Endothelial cell of umbilical vein (primary cell): ENCODE measurements at regions of chr6 and their contacts with region 1.

Region 1: DNA sequence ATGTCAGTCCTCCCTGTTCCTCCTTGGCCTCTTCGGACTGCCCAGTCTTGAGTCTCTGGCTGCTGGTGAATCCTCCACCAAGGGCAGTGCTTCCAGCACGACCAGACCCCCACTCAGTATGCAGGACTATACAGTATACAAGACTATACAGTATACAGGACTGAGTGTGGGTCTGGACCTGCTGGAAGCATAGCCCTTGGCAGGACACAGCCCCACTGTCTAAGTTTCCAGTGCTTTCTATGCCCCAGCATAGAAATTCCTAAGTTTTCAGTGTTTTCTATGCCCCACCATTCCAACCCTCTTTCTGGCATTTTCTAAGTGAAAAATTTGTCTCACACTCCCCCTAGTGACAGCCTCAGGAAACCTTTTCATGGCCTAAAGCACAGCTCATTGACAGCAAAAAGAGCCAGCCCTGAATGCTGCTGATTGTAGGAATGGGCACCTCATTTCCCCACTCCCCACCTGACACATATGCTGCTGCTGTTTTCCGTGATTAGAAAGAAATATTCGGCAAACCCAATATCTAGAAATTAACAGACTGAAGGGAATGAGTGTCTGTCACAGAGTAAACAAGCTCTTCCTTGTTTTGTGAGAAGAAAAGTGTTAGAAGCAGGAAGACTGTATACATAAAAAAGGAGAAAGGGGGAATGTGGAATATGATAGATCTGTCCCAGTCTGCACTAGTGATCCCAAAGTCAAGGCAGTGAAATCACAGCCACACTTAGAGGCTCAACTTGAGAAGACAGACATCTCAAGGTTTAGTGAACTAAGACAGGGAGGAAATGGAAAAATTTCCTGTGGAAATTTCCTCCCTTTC is 206.9 kb downstream of the IBTK start:
- DNase-seq: peak; percentile 72
- H3K4me3 ChIP-seq: no peak overlapping the region
- H3K27ac ChIP-seq: no peak overlapping the region
- H3K4me1 ChIP-seq: peaks cover 9% of the 10 kb centered on the region
- H3K27me3 ChIP-seq: no peaks in the 10 kb centered on the region
- CTCF ChIP-seq: peak; percentile 73 to 76
- POLR2A ChIP-seq: no peak

Region 2: GRCh38 chr6:80733641-80734040 is 1307.0 kb before region 1 on chr6:
- CTCF ChIA-PET with region 1: no interaction called
- POLR2A ChIA-PET with region 1: no interaction called
- dilution Hi-C with region 1: no loop called
- intact Hi-C with region 1: loop called (anchors 10 kb)
- DNase-seq: no peak
- H3K4me3 ChIP-seq: no peak overlapping the region
- H3K27ac ChIP-seq: no peak overlapping the region
- H3K4me1 ChIP-seq: no peaks in the 10 kb centered on the region
- H3K27me3 ChIP-seq: no peaks in the 10 kb centered on the region
- CTCF ChIP-seq: no peak
- POLR2A ChIP-seq: no peak

Region 3: DNA sequence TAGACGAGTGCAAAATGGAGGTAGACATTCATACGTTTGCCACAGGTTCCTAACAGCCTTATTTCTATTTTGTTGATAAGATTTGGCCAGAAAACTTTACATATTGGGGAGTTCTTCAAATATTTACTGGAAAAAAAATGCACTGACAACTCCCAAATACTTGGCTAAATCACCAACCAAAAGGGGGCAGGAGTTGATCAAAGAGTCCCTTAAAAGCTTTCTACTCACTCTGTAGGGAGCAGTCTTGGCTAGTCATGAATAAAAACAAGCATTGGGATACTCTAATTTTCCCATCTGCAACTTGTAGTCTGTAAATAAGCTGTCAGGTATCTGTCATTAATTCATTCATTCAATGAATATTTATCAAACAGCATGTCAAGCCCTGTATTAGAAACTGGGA is 306.5 kb before region 1 on chr6:
- CTCF ChIA-PET with region 1: interaction called, 23 read pairs
- POLR2A ChIA-PET with region 1: no interaction called
- dilution Hi-C with region 1: no loop called
- intact Hi-C with region 1: no loop called
- DNase-seq: peak; percentile 29
- H3K4me3 ChIP-seq: no peak overlapping the region
- H3K27ac ChIP-seq: no peak overlapping the region
- H3K4me1 ChIP-seq: no peaks in the 10 kb centered on the region
- H3K27me3 ChIP-seq: no peaks in the 10 kb centered on the region
- CTCF ChIP-seq: no peak
- POLR2A ChIP-seq: no peak

Region 4: DNA sequence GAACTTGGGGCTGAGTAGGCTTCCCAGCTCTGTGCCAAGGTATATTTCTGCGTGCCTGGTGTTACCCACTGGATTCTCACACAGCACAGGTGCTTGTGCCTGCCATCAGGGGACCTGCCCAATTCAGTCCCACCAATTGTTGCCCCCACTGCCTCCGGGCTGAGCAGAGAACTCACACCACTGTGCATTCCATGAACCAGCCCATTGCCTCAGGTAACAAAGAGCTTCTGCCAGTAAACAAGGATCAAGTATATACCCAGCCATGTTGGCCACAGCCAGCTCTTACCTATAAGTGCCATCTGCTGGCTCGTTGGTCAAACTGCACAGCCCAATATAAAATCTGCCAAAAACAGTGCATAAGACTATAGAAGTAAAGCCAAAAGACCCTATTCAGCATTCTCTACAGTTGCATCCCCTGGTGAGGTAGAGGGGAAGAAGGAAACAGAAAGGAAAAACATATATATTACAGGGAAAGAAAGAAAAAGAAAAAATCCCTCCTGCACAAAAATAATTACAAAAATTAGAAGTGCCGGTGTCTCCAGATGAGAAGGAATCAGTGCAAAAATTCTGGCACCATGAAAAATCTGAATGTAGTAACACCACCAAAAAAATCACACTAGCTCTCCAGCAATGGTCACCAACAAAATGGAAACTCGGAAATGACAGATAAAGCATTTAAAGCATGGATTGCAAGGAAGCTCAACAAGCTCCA is 34.4 kb before region 1 on chr6:
- CTCF ChIA-PET with region 1: interaction called, 29 read pairs
- POLR2A ChIA-PET with region 1: no interaction called
- dilution Hi-C with region 1: no loop called
- intact Hi-C with region 1: loop called (anchors 2 kb)
- DNase-seq: no peak
- H3K4me3 ChIP-seq: no peak overlapping the region
- H3K27ac ChIP-seq: no peak overlapping the region
- H3K4me1 ChIP-seq: no peaks in the 10 kb centered on the region
- H3K27me3 ChIP-seq: no peaks in the 10 kb centered on the region
- CTCF ChIP-seq: peak; percentile 61 to 66
- POLR2A ChIP-seq: no peak

Region 5: GRCh38 chr6:82057846-82058554 is 17.4 kb after region 1 on chr6:
- CTCF ChIA-PET with region 1: interaction called, 10 read pairs
- POLR2A ChIA-PET with region 1: no interaction called
- dilution Hi-C with region 1: no loop called
- intact Hi-C with region 1: no loop called
- DNase-seq: peak; percentile 84
- H3K4me3 ChIP-seq: no peak overlapping the region
- H3K27ac ChIP-seq: no peak overlapping the region
- H3K4me1 ChIP-seq: no peaks in the 10 kb centered on the region
- H3K27me3 ChIP-seq: no peaks in the 10 kb centered on the region
- CTCF ChIP-seq: no peak
- POLR2A ChIP-seq: no peak

Region 6: DNA sequence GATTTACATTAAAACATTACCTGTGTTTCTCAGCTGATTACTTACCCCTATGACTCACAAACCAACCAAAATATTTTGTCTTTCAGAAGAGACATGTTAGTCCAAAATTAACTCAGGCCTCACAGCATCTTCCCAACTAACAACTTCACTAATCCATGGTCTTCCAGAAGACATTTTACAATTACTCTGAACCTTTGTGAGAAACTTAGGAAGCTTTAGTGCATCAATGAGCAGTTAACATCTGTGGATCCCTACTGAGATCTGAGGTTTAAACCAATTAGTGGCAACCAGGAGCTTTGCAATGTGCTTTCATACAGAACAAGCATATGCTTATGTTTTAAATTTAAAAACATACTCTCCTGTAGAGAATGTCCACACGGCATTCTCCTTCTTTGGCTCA is 755.3 kb after region 1 on chr6:
- CTCF ChIA-PET with region 1: no interaction called
- POLR2A ChIA-PET with region 1: no interaction called
- dilution Hi-C with region 1: no loop called
- intact Hi-C with region 1: no loop called
- DNase-seq: no peak
- H3K4me3 ChIP-seq: no peak overlapping the region
- H3K27ac ChIP-seq: no peak overlapping the region
- H3K4me1 ChIP-seq: no peaks in the 10 kb centered on the region
- H3K27me3 ChIP-seq: peaks cover 0 to 2% of the 10 kb centered on the region in 2 experiments
- CTCF ChIP-seq: no peak
- POLR2A ChIP-seq: no peak